ENCODE measurements at regions of chr20 and their contacts with region 1.

Region 1: DNA sequence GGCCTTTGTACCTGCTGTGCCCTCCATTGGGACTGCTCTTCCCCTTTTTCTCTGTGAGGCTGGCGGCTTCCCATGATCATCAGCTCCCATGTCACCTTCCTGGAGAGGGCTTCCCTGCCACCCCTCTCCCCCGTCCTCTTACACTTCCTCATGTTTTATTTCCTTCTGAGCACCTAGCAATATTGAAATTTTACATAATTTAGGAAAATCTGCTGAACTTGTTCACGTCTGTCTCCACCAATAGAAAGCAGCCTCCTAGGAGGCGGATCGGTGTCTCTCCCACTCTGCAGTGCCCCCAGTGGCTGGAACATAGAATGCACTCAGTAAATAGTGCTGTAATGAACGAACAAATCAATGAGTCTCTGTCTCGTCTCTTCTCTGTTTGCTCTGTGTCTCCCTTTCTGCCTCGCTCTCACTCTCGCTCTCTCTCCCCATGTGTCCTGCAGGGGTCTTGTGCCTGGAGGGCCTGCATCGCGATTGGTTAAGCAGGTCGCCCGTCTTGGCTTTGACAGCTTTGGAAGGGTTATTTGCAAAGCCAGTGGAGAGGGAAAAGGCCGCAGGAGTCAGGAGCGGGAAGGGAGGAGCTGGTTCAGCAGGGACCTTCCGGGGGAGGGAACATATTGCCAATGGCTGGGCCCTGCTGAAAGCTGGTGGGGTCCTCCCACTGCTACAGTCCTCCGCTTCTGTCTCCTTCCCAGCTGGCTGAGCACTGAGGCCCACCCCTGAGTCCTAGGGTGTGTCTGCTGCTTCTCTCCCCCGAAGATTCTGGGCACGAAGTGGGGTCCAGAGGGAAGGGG is 12.1 kb upstream of the OCSTAMP start:
- DNase-seq: peak in 4 of 5 donors; percentile 48 to 77 (median 62)
- ATAC-seq: peak; percentile 79 to 88 (median 84)
- H3K4me3 ChIP-seq: peak overlapping the region in 11 of 12 donors; percentile 16 to 55 (median 41)
- H3K27ac ChIP-seq: peak overlapping the region in 8 of 12 donors; percentile 4 to 70 (median 50)
- H3K4me1 ChIP-seq: peaks cover 0 to 20% (median 8%) of the 10 kb centered on the region in 12 donors
- H3K27me3 ChIP-seq: no peaks in the 10 kb centered on the region
- CTCF ChIP-seq: peak; percentile 85 to 97 (median 92)
- POLR2A ChIP-seq: no peak

Region 2: GRCh38 chr20:46468509-46468908 is 94.1 kb before region 1 on chr20:
- intact Hi-C with region 1: no loop called
- DNase-seq: no peak
- ATAC-seq: no peak
- H3K4me3 ChIP-seq: no peak overlapping the region
- H3K27ac ChIP-seq: no peak overlapping the region
- H3K4me1 ChIP-seq: no peaks in the 10 kb centered on the region
- H3K27me3 ChIP-seq: peaks cover 0 to 3% (median 0%) of the 10 kb centered on the region in 9 donors
- CTCF ChIP-seq: no peak
- POLR2A ChIP-seq: no peak

Region 3: GRCh38 chr20:46681032-46681854 is 118.7 kb after region 1 on chr20:
- intact Hi-C with region 1: loop called in 8 of 10 experiments (anchors 2 to 5 kb)
- DNase-seq: peak in 3 of 5 donors; percentile 24 to 40 (median 35)
- ATAC-seq: peak in 2 of 4 donors; percentile 28 to 49
- H3K4me3 ChIP-seq: no peak overlapping the region
- H3K27ac ChIP-seq: no peak overlapping the region
- H3K4me1 ChIP-seq: peaks cover 0 to 31% (median 20%) of the 10 kb centered on the region in 12 donors
- H3K27me3 ChIP-seq: no peaks in the 10 kb centered on the region
- CTCF ChIP-seq: peak; percentile 56 to 80 (median 77)
- POLR2A ChIP-seq: no peak

Measured in heart left ventricle (tissue), 16 donors.